Activated naive CD4-positive, alpha-beta T cell treated with anti-CD3 and anti-CD28 coated beads, Interleukin-2, amount 10 ng/mL, durations not matched to agents 7 days and 5 days (primary cell): ENCODE measurements at regions of chr6 and their contacts with region 1.

Region 1: GRCh38 chr6:135145063-135145800 is 35.9 kb upstream of the MYB start:
- DNase-seq: peak; percentile 28
- H3K4me3 Mint-ChIP-seq: peak overlapping the region; percentile 25
- H3K27ac Mint-ChIP-seq: peak overlapping the region; percentile 85
- H3K4me1 Mint-ChIP-seq: peaks cover 62% of the 10 kb centered on the region
- H3K27me3 Mint-ChIP-seq: no peaks in the 10 kb centered on the region

Region 2: GRCh38 chr6:135054569-135055498 is 90.4 kb before region 1 on chr6 and contains the start of gene HBS1L:
- CTCF ChIA-PET with region 1: interaction called, 16 read pairs
- DNase-seq: peak; percentile 97
- H3K4me3 Mint-ChIP-seq: peak within 1 kb of the TSS; percentile 95
- H3K27ac Mint-ChIP-seq: peak within 1 kb of the TSS; percentile 96
- H3K4me1 Mint-ChIP-seq: peaks cover 39% of the 10 kb centered on the region
- H3K27me3 Mint-ChIP-seq: no peaks in the 10 kb centered on the region

Region 3: GRCh38 chr6:135114355-135115145 is 30.7 kb before region 1 on chr6:
- CTCF ChIA-PET with region 1: interaction called, 11 read pairs
- DNase-seq: peak; percentile 63
- H3K4me3 Mint-ChIP-seq: no peak overlapping the region
- H3K27ac Mint-ChIP-seq: peak overlapping the region; percentile 82
- H3K4me1 Mint-ChIP-seq: peaks cover 72% of the 10 kb centered on the region
- H3K27me3 Mint-ChIP-seq: no peaks in the 10 kb centered on the region

Region 4: DNA sequence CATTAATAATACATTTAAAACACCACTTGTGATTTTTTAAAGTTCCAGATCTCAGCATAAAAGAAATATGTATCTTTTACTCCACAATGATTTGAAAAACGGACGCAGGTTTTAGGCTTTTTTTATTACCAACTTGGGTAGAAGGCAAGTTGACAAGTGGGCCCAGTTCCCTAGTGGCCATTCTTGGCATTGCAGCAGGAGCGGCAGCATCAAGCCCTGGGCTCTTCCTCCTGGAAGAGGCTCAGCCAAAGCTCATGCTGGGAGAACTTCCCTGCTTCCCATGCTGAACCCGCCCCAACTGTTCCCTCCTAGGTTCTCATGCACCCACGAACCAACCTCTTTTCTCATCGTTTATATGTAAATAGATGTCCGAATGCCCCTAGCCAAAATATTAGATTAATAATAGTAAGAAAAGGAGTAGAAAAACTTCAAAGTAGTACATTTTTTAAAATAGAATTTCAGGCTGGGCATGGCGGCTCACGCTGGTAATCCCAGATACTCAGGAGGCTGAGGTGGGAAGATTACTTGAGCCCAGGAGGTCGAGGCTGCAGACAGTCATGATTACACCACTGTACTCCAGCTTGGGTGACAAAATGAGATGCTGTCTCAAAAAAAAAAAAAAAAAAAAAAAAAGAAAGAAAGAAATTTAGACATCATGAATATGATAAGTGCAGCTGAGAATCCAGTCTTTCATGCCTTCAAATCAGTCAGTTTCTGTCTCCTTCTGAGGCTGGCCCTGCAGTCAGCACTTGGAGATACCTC is 17.6 kb after region 1 on chr6:
- CTCF ChIA-PET with region 1: interaction called, 13 read pairs
- DNase-seq: peak; percentile 47
- H3K4me3 Mint-ChIP-seq: no peak overlapping the region
- H3K27ac Mint-ChIP-seq: no peak overlapping the region
- H3K4me1 Mint-ChIP-seq: peaks cover 36% of the 10 kb centered on the region
- H3K27me3 Mint-ChIP-seq: peaks cover 3% of the 10 kb centered on the region

Region 5: GRCh38 chr6:135191508-135192255 is 46.5 kb after region 1 on chr6:
- CTCF ChIA-PET with region 1: interaction called, 73 read pairs
- DNase-seq: no peak
- H3K4me3 Mint-ChIP-seq: no peak overlapping the region
- H3K27ac Mint-ChIP-seq: no peak overlapping the region
- H3K4me1 Mint-ChIP-seq: peaks cover 22% of the 10 kb centered on the region
- H3K27me3 Mint-ChIP-seq: no peaks in the 10 kb centered on the region

Region 6: DNA sequence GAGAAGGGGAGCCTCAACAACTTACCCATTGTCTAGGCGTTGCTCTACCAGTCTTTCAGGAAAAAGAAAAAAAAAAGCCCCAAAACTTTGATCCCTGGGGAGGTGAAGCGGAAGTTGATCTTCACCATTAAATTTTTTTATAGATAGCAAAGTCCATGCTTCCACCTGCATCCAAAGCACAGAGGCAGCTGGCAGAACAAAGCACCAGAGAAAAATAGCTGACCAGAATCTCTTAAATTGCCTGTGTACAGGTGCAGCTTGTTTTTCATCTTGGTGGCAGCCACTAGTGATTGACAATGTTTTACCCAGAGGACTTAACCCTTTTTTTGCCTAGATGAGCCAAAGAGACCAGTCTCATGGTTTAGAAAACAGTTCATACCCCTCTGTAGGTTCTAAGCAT is 121.9 kb after region 1 on chr6:
- CTCF ChIA-PET with region 1: no interaction called
- DNase-seq: no peak
- H3K4me3 Mint-ChIP-seq: no peak overlapping the region
- H3K27ac Mint-ChIP-seq: no peak overlapping the region
- H3K4me1 Mint-ChIP-seq: no peaks in the 10 kb centered on the region
- H3K27me3 Mint-ChIP-seq: no peaks in the 10 kb centered on the region